ENCODE measurements at regions of chr18 and their contacts with region 1.

Region 1: GRCh38 chr18:3593904-3594661 is 144.1 kb downstream of the TGIF1 start:
- DNase-seq: peak; percentile 83
- H3K4me3 Mint-ChIP-seq: peak overlapping the region; percentile 89
- H3K27ac Mint-ChIP-seq: peak overlapping the region; percentile 98
- H3K4me1 Mint-ChIP-seq: peaks cover 63% of the 10 kb centered on the region
- H3K27me3 Mint-ChIP-seq: no peaks in the 10 kb centered on the region

Region 2: DNA sequence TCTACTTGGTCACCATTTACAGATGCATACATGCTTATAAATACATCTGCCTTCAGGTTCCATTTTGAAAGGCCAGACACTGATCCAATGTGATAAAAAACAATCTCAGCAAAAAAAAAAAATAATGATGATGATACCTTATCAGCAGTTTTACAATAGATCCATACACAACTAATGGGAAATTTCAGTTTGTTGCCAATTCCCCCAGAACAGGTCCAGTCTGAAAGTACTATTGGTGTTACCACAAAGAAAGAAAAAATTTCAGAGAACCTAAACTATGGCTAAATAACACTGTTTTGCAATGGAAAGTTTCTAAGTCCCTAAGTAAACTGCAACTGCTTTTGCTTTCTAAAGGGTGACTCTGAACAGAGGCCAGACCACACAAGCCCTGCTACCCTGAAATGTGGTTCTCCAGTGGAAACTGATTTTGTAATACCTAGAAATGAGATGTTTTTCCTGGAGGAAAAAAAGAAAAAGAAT is 635.2 kb before region 1 on chr18:
- intact Hi-C with region 1: loop called (anchors 1 kb)
- DNase-seq: peak; percentile 46
- H3K4me3 Mint-ChIP-seq: peak overlapping the region; percentile 81
- H3K27ac Mint-ChIP-seq: peak overlapping the region; percentile 99
- H3K4me1 Mint-ChIP-seq: peaks cover 93% of the 10 kb centered on the region
- H3K27me3 Mint-ChIP-seq: no peaks in the 10 kb centered on the region

Region 3: DNA sequence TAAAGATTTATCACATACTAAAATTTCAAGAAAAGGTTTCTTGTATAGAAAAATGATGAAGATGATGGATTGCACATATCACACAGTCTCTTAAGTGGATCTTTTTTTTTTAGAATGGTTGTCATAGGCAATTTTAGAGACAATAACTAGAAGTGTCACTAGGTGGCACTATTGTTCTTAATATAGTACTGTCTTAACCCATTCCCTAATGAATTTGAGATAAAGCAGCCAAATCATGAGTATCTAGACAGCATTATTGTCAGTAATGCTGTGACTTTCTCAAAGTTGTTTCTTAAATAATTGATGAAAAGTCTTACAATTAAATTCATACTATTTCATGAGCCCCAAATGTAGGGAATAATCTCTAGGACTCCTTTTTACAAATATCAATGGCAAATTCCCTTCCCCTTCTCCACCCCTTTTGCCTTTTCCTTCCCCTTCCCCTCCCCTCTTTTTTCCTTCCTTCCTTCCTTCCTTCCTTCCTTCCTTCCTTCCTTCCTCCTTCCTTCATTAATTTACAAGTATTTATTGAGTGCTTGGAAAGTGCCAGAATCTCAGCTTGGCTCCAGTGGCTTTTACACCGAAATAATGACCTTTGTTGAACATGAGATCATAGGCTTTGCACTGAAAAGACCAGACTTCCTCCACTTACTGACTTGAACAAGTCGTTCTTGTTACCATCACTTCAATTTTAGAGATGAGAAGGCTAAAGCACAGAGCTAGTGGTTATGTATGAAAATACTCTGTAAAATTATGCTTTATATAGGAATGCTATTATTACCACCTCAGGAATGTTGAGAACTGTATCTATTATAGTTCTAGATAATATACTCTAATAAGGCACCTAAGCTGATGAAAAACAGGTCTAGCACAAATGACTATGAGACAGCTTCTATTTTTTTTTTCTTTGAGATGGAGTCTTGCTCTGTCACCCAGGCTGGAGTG is 312.4 kb before region 1 on chr18:
- intact Hi-C with region 1: loop called (anchors 2 kb)
- DNase-seq: no peak
- H3K4me3 Mint-ChIP-seq: no peak overlapping the region
- H3K27ac Mint-ChIP-seq: no peak overlapping the region
- H3K4me1 Mint-ChIP-seq: peaks cover 5% of the 10 kb centered on the region
- H3K27me3 Mint-ChIP-seq: peaks cover 2% of the 10 kb centered on the region

Region 4: GRCh38 chr18:3454365-3455089 is 139.6 kb before region 1 on chr18:
- intact Hi-C with region 1: loop called (anchors 1 kb)
- DNase-seq: no peak
- H3K4me3 Mint-ChIP-seq: peak overlapping the region; percentile 90
- H3K27ac Mint-ChIP-seq: peak overlapping the region; percentile 99
- H3K4me1 Mint-ChIP-seq: peaks cover 71% of the 10 kb centered on the region
- H3K27me3 Mint-ChIP-seq: peaks cover 2% of the 10 kb centered on the region

Region 5: GRCh38 chr18:3623769-3624545 is 29.9 kb after region 1 on chr18:
- intact Hi-C with region 1: loop called (anchors 1 kb)
- DNase-seq: no peak
- H3K4me3 Mint-ChIP-seq: peak overlapping the region; percentile 47
- H3K27ac Mint-ChIP-seq: peak overlapping the region; percentile 90
- H3K4me1 Mint-ChIP-seq: peaks cover 42% of the 10 kb centered on the region
- H3K27me3 Mint-ChIP-seq: peaks cover 2% of the 10 kb centered on the region

Region 6: DNA sequence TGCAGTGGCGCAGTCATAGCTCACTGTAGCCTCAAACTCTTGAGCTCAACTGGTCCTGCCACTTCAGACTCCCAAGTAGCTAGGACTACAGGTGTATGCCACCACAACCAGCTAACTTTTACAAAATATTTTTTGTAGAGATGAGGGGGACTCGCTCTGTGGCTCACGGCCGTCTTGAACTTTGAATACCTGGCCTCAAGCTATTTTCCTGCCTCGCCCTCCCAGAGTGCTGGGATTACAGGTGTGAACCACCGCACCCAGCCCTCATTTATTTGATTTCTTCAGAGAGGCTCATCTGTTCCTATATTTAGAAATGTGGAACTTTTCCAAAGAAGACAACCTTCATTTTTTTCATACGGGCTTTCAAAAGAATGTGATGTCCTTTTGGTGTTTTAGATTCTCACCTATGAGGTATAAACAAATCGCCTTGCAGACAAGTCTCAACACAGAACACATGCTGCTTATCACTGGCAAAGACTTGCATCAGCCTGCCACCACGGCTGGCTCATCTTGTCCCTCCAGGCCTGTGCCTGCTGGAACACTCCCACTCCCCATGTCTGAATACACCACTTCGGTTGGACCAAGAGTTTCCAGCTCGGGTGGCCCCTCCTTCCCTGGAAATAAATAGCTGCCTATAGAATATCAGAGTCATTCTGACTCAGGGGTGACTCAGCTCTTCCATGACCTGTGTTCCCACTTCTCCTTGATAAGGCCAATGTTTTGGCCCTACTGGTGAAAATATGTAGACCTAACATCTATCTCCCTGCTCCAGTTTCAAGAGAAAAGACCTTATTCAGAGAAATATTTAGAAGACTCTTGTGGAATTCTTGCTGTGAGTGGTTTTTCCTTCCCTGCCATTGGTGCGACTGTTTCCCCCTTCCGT is 58.5 kb after region 1 on chr18:
- intact Hi-C with region 1: loop called (anchors 1 kb)
- DNase-seq: peak; percentile 12
- H3K4me3 Mint-ChIP-seq: peak overlapping the region; percentile 51
- H3K27ac Mint-ChIP-seq: peak overlapping the region; percentile 90
- H3K4me1 Mint-ChIP-seq: peaks cover 54% of the 10 kb centered on the region
- H3K27me3 Mint-ChIP-seq: peaks cover 2% of the 10 kb centered on the region

Measured in activated T-helper 1 cell treated with anti-CD3 and anti-CD28 coated beads, Interleukin-12 subunit alpha, Interleukin-12 subunit beta, Interleukin-2, Interleukin-4 antibody, amounts not matched to agents 30 ng/mL and 10 ng/mL and 1 ng/mL, durations not matched to agents 14 hours and 24 hours and 36 hours (primary cell).